ENCODE measurements at regions of chr15 and their contacts with region 1.

Region 1: GRCh38 chr15:30073915-30074314 is 8.8 kb upstream of the GOLGA8J start:
- DNase-seq: no peak

Region 2: DNA sequence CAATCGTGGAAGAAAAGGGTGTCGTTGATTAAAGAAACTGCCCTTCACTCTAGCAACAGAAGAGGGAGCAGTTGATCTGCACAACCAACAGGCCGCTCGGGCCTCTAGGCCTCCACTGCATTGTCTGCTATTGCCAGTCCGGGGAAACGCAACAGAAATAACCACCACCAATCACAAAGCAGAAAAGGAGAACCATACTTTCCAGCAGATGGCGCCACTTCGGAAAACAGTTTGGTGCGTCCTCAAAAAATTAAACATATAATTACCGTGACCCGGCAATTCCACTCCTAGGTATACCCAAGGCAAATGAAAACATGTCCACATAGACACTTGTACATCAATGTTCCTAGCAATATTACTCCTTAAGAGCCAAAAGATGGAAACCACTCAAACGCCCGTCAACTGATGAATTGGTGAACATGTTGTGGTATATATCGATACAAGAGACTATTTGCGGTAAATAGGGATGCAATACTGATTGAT is 405.8 kb before region 1 on chr15:
- intact Hi-C with region 1: loop called (anchors 10 kb)
- DNase-seq: no peak

Region 3: DNA sequence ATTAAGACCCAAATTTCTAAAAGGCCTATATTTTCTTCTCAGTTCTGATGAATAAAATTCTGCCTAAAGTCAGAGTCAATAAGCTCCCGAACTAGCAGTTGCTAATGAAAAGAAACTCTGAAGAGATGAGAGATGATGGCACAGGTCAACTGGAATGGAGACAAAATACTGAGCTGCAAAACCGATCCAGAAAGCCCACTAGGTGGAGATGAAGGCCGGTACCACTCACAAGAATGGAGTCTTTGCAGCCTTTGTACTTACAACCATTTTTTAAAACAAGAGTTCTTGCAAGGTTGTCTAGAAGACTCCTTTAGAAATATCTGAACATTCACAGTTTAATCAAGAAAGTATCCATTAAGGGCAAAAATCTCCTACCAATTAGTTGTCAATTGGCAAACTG is 131.8 kb before region 1 on chr15:
- intact Hi-C with region 1: loop called (anchors 10 kb)
- DNase-seq: no peak

Region 4: DNA sequence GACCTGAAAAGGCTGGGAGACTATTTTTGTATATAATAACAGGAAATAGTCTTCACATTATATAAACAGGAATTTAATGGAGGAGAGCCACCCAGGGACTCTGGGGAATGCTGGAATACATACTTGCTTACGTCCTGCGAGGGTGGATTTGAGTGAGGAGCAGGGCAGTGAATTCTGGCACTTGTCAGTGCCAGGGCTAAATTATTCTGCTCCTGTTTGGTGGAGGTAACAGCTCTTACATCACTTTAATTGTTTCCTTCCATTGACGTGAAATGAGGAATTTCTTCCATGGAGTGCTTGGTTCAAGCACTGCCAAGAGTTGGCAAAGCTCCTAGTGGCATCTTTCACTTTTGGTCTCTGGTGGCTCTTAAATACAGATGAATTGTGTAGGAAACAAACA is 85.2 kb before region 1 on chr15:
- intact Hi-C with region 1: no loop called
- DNase-seq: no peak

Region 5: GRCh38 chr15:30791239-30792175 is 717.6 kb after region 1 on chr15:
- intact Hi-C with region 1: no loop called
- DNase-seq: no peak